AG04450 (cell line): ENCODE measurements at regions of chr4 and their contacts with region 1.

Region 1: DNA sequence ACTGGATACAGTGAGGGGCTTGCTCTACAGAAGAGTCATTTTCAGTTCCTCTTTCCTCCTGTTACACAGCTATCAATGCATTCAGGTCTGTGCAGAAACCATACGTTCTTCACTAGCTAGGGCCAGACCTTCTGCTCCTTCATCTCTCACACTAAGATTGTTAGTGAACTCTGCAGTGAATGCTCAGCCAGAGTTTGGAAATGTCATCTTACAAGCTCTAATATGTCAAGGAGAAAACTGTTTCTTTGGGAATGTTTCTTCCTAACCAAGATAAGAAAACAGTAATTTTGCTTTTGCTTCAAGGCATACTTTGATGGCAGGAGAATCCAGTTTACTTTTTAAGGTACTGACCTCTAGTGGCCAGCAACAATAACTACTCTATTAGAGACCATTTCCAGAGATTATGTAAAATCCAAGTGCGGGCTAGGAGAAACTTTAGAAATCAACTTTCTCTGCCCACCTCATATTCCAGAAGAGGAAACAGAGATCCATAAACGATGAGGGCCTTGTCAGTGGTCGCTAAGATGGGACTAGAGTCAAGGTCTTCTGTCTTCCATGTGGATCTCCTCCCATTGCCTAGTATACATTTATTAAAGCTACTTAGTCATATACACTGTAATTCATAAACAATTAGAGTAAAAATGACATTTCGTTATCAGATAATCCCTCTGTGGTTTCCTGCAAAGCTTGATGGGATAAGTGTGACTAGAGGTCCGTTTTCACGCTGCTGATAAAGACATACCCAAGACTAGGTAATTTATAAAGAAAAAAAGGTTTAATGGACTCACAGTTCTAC is 12.1 kb upstream of the CC2D2A start:
- DNase-seq: no peak
- H3K4me3 ChIP-seq: no peak overlapping the region
- H3K27ac ChIP-seq: no peak overlapping the region
- H3K27me3 ChIP-seq: no peaks in the 10 kb centered on the region
- CTCF ChIP-seq: peak; percentile 80

Region 2: GRCh38 chr4:15231265-15232091 is 226.1 kb before region 1 on chr4:
- CTCF ChIA-PET with region 1: interaction called, 191 read pairs
- POLR2A ChIA-PET with region 1: no interaction called
- DNase-seq: peak; percentile 79
- H3K4me3 ChIP-seq: no peak overlapping the region
- H3K27ac ChIP-seq: peak overlapping the region; percentile 47
- H3K27me3 ChIP-seq: no peaks in the 10 kb centered on the region
- CTCF ChIP-seq: peak; percentile 81

Region 3: DNA sequence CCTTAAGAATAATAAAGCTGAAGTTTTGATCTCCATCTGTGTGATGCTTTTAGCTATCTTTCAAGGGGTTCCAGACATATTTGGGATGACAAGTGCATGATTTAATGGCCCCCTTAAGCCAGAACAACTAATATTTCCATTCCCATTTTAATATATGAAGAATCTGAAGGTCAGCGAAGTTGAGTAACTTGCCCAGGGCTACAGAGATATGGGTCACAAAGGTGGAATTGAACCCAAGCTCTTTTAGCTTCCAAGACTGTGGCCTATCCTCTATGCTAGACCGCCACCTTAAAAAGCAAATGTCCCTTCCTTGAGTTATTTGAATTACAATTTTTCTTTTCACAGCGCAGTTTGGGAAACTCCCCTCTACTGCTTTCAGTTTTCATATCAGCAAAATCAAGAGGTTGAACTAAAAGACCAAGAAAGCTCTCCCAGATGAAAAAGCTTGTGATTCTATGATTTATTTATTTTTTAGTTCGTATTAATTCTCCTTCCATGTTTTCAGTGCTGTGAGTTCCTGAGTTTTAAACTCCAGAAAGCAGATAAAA is 204.3 kb before region 1 on chr4:
- CTCF ChIA-PET with region 1: interaction called, 10 read pairs
- POLR2A ChIA-PET with region 1: no interaction called
- DNase-seq: no peak
- H3K4me3 ChIP-seq: no peak overlapping the region
- H3K27ac ChIP-seq: no peak overlapping the region
- H3K27me3 ChIP-seq: no peaks in the 10 kb centered on the region
- CTCF ChIP-seq: no peak

Region 4: DNA sequence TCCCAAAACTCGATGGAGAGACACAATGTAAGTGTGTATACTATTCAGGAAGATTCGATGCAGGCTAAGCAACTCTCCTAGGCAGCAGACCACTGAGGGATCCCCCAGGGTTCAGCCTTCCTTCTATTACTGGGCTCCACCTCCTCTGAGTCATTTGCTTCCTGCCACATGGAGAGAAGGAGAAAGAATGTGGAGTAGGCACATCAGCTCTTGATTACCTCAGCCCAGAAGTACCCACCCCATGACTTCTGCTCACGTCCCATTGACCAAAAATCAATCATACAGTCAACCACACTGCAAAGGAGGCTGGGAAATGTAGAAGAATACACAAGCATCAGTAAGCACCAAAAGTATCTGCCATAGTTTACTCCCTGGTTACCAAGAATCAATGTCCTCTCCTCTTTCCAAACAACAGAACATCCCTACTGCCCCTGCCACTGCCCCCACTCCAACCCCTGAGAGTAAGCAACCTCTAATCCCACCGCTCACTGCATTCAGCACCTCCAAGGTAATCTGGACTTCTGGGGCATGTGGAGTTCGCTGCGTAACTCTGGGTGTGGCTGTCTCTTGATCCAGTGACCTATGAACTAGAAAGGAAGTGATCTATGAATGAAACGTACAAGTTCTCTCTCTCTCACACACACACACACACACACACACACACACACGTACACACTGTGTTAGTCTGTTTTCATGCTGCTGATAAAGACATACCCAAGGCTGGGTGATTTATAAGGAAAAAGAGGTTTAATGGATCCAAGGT is 121.0 kb before region 1 on chr4:
- CTCF ChIA-PET with region 1: interaction called, 14 read pairs
- POLR2A ChIA-PET with region 1: no interaction called
- DNase-seq: peak; percentile 76
- H3K4me3 ChIP-seq: no peak overlapping the region
- H3K27ac ChIP-seq: peak overlapping the region; percentile 71
- H3K27me3 ChIP-seq: no peaks in the 10 kb centered on the region
- CTCF ChIP-seq: no peak

Region 5: GRCh38 chr4:15396157-15396800 is 61.3 kb before region 1 on chr4:
- CTCF ChIA-PET with region 1: interaction called, 21 read pairs
- POLR2A ChIA-PET with region 1: no interaction called
- DNase-seq: no peak
- H3K4me3 ChIP-seq: no peak overlapping the region
- H3K27ac ChIP-seq: no peak overlapping the region
- H3K27me3 ChIP-seq: no peaks in the 10 kb centered on the region
- CTCF ChIP-seq: peak; percentile 68

Region 6: DNA sequence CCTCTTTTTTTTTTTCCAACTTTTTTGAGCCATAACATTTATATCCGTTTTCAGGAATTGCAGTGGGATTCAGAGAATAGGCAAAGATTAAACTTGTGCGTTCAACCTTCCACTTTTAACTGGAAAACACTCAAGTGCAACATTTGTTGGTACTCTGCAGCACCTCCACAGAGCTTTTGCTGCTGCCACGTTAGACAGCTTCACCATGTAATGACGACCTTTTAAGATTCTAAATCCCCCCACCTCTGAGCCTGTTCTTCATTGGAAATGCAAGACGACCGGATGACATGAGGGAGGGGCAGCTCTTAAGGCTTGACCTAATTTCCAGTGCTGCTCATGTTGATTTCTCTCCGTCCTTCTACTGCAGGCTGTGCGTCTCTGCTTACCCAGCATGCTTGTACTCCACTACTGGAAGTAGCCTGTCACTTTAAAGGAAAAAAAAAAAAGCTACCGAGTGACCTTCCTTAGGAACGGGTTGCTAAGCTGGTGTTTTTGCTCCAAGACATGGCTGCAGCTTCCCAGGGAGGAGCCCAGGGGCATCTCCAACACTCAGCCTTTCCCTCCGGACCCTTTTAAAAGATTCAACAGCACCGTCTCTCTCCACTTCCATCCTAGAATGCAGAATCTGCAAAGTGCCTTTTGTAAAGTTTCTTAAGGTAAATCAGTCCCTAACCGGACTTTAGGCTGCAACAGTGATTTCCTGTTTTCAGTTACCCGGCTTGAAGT is 12.0 kb after region 1 on chr4 and contains the start of gene CC2D2A:
- CTCF ChIA-PET with region 1: interaction called, 60 read pairs
- POLR2A ChIA-PET with region 1: interaction called, 7 read pairs
- DNase-seq: no peak
- H3K4me3 ChIP-seq: peak within 1 kb of the TSS; percentile 65
- H3K27ac ChIP-seq: no peak within 1 kb of the TSS
- H3K27me3 ChIP-seq: no peaks in the 10 kb centered on the region
- CTCF ChIP-seq: no peak
- polyA plus RNA-seq, gene CC2D2A: 33.8 and 40.7 TPM in 2 replicates